HCT116 (cell line): ENCODE measurements at regions of chr3 and their contacts with region 1.

Region 1: DNA sequence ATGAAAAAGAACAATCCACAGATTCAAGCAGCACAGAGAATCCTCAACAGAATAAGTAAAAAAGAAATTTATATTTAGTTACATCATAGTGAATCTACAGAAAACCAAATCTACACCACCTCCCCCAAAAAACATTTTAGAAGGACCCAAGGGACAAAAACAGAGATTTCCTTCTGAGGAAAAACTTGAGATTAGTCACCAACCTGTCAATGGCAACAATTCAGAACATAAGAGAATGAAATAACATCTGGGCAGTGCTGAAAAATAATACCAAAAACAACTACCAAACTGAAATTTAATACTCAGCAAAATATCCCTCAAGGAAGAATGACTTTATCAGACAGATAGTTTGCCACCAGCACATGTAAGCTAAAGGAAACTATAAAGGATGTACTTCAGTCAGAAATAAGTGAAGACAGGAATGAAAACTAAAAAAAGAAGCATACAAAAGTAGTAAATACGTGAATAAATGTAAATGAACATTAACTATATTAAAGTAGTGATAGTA is 260.7 kb downstream of the ULK4 start:
- DNase-seq: no peak
- ATAC-seq: no peak
- H3K4me3 ChIP-seq: no peak overlapping the region
- H3K27ac ChIP-seq: no peak overlapping the region
- H3K4me1 ChIP-seq: no peaks in the 10 kb centered on the region
- H3K27me3 ChIP-seq: no peaks in the 10 kb centered on the region
- CTCF ChIP-seq: no peak
- POLR2A ChIP-seq: no peak
- RAD21 ChIP-seq: no peak

Region 2: GRCh38 chr3:41863024-41863423 is 161.8 kb after region 1 on chr3:
- CTCF ChIA-PET with region 1: no interaction called
- POLR2A ChIA-PET with region 1: no interaction called
- RAD21 ChIA-PET with region 1: no interaction called
- intact Hi-C with region 1: loop called (anchors 5 kb)
- DNase-seq: peak; percentile 6
- ATAC-seq: peak; percentile 92
- H3K4me3 ChIP-seq: no peak overlapping the region
- H3K27ac ChIP-seq: no peak overlapping the region
- H3K4me1 ChIP-seq: no peaks in the 10 kb centered on the region
- H3K27me3 ChIP-seq: no peaks in the 10 kb centered on the region
- CTCF ChIP-seq: peak in 2 of 3 experiments; percentile 39 to 44; a peak in 4 of 6 replicates
- POLR2A ChIP-seq: no peak
- RAD21 ChIP-seq: 0 out of 2 replicates have a peak, but pooled peaks have one; percentile 8